Heart left ventricle (tissue), 16 donors: ENCODE measurements at regions of chr7 and their contacts with region 1.

Region 1: GRCh38 chr7:139777948-139778841 is at the start of gene HIPK2:
- DNase-seq: peak; percentile 83 to 90 (median 90)
- ATAC-seq: peak; percentile 51 to 88 (median 78)
- H3K4me3 ChIP-seq: peak within 1 kb of the TSS; percentile 65 to 95 (median 90)
- H3K27ac ChIP-seq: peak within 1 kb of the TSS; percentile 82 to 98 (median 94)
- H3K4me1 ChIP-seq: peaks cover 0 to 42% (median 26%) of the 10 kb centered on the region in 12 donors
- H3K27me3 ChIP-seq: no peaks in the 10 kb centered on the region
- CTCF ChIP-seq: no peak
- POLR2A ChIP-seq: no peak
- total RNA-seq, gene HIPK2: 102 to 244 (median 143) TPM

Region 2: DNA sequence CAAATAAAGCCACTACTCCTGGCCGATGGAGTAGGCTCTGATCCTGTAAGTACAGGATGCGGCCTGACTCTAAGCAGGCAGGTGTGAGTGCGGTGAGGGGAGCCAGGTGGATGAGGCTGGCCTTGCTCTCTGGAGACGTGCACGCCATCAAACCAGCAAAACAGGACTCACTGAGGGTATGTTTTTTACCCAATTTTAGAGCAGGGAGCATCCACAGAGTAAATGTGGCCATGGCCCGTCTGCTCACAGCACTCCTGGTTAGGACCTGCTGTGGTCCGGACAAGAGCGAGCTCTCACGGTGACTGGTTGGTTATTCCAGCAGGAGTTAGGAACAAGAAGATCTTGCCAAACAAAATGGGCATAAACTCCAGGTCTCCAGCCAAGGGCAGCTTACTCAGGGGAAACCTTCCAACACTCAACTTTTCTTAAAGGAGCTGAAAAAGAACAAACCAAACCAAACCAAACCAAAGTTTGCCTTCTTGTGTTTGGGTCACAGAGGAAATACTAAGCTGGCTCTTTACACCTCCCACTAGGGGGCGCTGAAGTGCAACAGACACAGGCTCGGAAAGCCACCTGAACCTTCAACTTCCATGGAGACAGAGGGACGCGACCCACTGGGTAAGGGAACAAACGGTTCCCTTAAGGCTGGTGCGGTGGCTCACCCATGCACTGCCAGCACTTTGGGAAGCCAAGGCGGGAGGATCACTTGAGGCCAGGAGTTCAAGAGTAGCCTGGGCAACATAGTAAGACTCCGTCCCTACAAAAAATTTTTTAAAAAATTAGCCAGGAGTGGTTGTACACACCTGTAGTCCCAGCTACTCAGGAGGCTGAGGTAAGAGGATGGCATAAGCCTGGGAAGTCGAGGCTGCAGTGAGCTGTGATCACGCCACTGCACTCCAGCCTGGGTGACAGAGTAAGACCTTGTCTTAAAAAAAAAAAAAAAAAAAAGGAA is 132.3 kb before region 1 on chr7:
- intact Hi-C with region 1: loop called (anchors 1 to 5 kb)
- DNase-seq: peak; percentile 83 to 90 (median 85)
- ATAC-seq: peak; percentile 53 to 71 (median 54)
- H3K4me3 ChIP-seq: no peak overlapping the region
- H3K27ac ChIP-seq: peak overlapping the region in 9 of 12 donors; percentile 5 to 83 (median 77)
- H3K4me1 ChIP-seq: peaks cover 0 to 53% (median 44%) of the 10 kb centered on the region in 12 donors
- H3K27me3 ChIP-seq: no peaks in the 10 kb centered on the region
- CTCF ChIP-seq: peak; percentile 84 to 95 (median 92)
- POLR2A ChIP-seq: peak in 1 of 2 donors; percentile 24

Region 3: DNA sequence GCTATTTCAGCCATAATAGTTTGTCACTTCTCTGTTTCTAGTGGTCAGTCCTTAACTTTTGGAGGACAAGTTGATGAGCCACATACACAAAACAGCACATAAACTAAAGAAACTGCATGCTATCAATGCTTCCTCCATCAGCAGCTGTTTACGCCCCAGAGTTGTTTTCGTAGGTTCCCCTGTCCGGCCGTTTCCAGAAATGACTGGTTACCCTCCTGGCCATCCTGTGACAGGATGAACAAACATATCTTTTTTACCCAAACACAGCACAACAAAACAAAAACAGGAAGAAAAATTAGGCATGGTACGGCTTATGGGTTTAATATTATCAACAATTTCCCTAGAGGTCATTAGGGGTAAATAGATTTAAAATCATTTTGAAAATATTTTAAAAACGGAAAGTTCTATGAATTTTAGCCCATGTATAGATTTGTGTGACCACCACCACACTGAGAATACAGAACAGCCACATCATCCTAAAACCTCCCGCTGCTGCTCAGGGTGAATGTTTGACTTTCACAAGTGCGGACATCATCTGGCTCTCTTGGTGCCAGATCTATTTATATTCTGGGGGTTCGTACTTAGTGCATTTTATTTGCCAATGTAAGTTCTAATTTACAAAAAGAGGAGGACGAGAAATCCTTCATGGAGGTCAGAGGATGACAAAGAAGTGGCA is 75.2 kb before region 1 on chr7:
- intact Hi-C with region 1: loop called in 1 of 10 experiments (anchors 10 kb)
- DNase-seq: no peak
- ATAC-seq: peak; percentile 48 to 71 (median 60)
- H3K4me3 ChIP-seq: no peak overlapping the region
- H3K27ac ChIP-seq: peak overlapping the region; percentile 66 to 93 (median 80)
- H3K4me1 ChIP-seq: peaks cover 14 to 87% (median 55%) of the 10 kb centered on the region in 12 donors
- H3K27me3 ChIP-seq: no peaks in the 10 kb centered on the region
- CTCF ChIP-seq: no peak
- POLR2A ChIP-seq: no peak

Region 4: GRCh38 chr7:139731802-139732470 is 46.3 kb before region 1 on chr7:
- intact Hi-C with region 1: loop called in 8 of 10 experiments (anchors 1 to 10 kb)
- DNase-seq: peak; percentile 80 to 93 (median 84)
- ATAC-seq: peak; percentile 64 to 77 (median 76)
- H3K4me3 ChIP-seq: peak overlapping the region in 4 of 12 donors; percentile 6 to 19 (median 9)
- H3K27ac ChIP-seq: peak overlapping the region; percentile 76 to 97 (median 91)
- H3K4me1 ChIP-seq: peaks cover 42 to 96% (median 82%) of the 10 kb centered on the region in 12 donors
- H3K27me3 ChIP-seq: no peaks in the 10 kb centered on the region
- CTCF ChIP-seq: no peak
- POLR2A ChIP-seq: peak in 1 of 2 donors; percentile 34

Region 5: DNA sequence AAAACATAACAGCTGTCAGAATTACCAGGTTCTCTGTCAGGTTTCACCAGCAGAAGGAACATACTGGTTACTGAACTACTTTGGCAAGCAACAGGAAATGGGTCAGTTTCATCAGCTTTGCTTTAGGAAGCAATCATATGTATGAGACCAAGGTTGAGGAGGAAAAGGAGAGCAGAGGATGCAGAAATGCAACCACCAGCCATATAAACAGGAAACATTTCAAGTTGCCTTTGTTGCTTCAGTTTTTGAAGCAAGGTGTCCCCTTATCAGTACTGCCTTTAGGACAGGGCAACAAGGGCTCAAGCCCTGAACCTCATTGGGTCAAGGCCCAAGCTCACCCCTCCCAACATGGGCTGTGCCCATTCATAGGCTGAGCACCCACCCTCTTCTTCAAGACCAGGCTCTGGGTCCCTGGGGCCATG is 10.6 kb before region 1 on chr7:
- intact Hi-C with region 1: no loop called
- DNase-seq: no peak
- ATAC-seq: no peak
- H3K4me3 ChIP-seq: no peak overlapping the region
- H3K27ac ChIP-seq: peak overlapping the region in 6 of 12 donors; percentile 0 to 73 (median 26)
- H3K4me1 ChIP-seq: peaks cover 5 to 98% (median 68%) of the 10 kb centered on the region in 12 donors
- H3K27me3 ChIP-seq: no peaks in the 10 kb centered on the region
- CTCF ChIP-seq: no peak
- POLR2A ChIP-seq: no peak

Region 6: DNA sequence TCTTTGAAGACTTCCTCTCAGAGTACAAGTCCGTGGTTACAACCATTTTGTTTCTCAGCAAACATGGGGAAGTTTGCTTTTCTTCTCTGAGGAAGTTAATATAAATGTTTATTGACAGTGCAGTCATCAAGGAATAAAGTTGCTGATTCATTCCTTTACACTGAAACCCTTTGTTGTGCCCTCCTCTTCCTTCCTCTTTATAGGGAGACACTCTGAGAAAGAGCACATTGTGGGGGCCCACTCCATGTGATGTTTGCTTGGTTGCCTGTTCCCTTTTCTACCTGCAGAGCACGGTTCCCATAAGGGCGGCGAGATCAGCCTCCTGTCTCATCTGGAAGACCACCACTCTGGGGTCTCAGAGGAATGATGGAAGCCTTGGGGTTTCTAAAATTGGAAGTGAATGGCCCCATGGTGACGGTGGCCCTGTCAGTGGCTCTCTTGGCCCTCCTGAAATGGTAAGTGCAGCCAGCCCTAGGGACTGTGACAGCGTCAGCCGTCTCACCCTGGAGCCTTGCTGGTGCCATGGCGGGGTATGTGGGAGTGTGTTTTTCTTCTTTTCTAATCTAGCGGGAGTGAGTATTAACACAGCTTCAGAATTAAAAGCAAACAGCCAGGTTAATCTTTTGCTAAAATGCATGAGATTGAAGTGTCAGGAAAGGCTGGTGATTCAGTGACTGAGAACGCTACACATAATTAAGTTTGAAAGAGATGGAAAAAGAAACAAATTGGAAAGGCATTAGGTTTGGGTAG is 51.0 kb after region 1 on chr7 and contains the start of gene TBXAS1:
- intact Hi-C with region 1: no loop called
- DNase-seq: peak in 2 of 5 donors; percentile 30 to 44
- ATAC-seq: peak; percentile 66 to 89 (median 77)
- H3K4me3 ChIP-seq: peak within 1 kb of the TSS in 8 of 12 donors; percentile 7 to 64 (median 30)
- H3K27ac ChIP-seq: peak within 1 kb of the TSS in 3 of 12 donors; percentile 9 to 90 (median 24)
- H3K4me1 ChIP-seq: peaks cover 0 to 17% (median 0%) of the 10 kb centered on the region in 12 donors
- H3K27me3 ChIP-seq: peaks cover 0 to 5% (median 0%) of the 10 kb centered on the region in 9 donors
- CTCF ChIP-seq: no peak
- POLR2A ChIP-seq: no peak
- total RNA-seq, gene TBXAS1: 2.0 to 32.0 (median 4.7) TPM

Region 7: GRCh38 chr7:139915864-139916716 is 137.9 kb after region 1 on chr7:
- intact Hi-C with region 1: loop called in 1 of 10 experiments (anchors 5 kb)
- DNase-seq: peak in 3 of 5 donors; percentile 26 to 61 (median 42)
- ATAC-seq: peak; percentile 65 to 85 (median 77)
- H3K4me3 ChIP-seq: no peak overlapping the region
- H3K27ac ChIP-seq: peak overlapping the region in 5 of 12 donors; percentile 0 to 62 (median 12)
- H3K4me1 ChIP-seq: peaks cover 0 to 51% (median 23%) of the 10 kb centered on the region in 12 donors
- H3K27me3 ChIP-seq: no peaks in the 10 kb centered on the region
- CTCF ChIP-seq: no peak
- POLR2A ChIP-seq: no peak

Region 8: GRCh38 chr7:140003913-140004382 is 225.8 kb after region 1 on chr7:
- intact Hi-C with region 1: loop called (anchors 2 to 10 kb)
- DNase-seq: no peak
- ATAC-seq: no peak
- H3K4me3 ChIP-seq: no peak overlapping the region
- H3K27ac ChIP-seq: no peak overlapping the region
- H3K4me1 ChIP-seq: no peaks in the 10 kb centered on the region
- H3K27me3 ChIP-seq: no peaks in the 10 kb centered on the region
- CTCF ChIP-seq: peak in 10 of 12 donors; percentile 23 to 53 (median 43)
- POLR2A ChIP-seq: no peak

Region 9: GRCh38 chr7:140153666-140154181 is 375.5 kb after region 1 on chr7:
- intact Hi-C with region 1: no loop called
- DNase-seq: peak in 1 of 5 donors; percentile 34
- ATAC-seq: no peak
- H3K4me3 ChIP-seq: no peak overlapping the region
- H3K27ac ChIP-seq: no peak overlapping the region
- H3K4me1 ChIP-seq: peaks cover 0 to 52% (median 25%) of the 10 kb centered on the region in 12 donors
- H3K27me3 ChIP-seq: no peaks in the 10 kb centered on the region
- CTCF ChIP-seq: no peak
- POLR2A ChIP-seq: no peak

Region 10: DNA sequence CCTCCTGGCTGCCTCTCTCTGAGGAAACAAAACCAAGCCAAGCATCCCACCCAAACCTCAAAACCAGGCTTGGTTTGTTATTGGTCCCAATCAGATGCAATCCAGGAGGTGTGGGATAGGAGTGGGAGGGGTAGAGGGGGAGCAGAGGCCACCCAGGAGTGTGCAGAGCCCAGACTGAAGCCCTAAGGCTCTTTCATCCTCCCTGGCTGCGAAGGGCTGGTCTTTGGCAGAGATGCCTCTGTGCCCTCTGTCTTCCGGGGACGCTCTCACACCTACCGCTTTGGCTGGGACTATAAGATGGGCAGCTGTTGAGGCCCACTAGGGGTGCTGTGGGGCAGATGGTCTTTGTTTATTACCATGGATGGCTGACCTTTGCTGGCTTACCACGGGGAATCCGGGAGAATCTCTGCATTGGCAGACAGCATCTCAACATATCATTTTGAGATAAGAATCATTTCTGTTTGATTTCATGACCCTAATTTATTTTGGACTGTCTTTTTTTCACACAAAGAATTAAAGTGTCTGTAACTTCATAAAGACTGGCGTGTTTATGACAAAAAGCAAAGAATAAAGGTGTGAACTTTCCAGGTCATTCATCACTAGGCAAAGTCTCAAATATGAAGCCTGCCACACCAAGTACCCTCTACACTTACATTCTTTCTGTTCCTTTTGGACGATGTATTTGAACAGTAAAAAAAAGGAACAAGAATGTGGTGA is 868.9 kb after region 1 on chr7:
- intact Hi-C with region 1: no loop called
- DNase-seq: peak in 1 of 5 donors; percentile 32
- ATAC-seq: peak; percentile 60 to 71 (median 69)
- H3K4me3 ChIP-seq: no peak overlapping the region
- H3K27ac ChIP-seq: no peak overlapping the region
- H3K4me1 ChIP-seq: peaks cover 0 to 18% (median under 1%) of the 10 kb centered on the region in 12 donors
- H3K27me3 ChIP-seq: no peaks in the 10 kb centered on the region
- CTCF ChIP-seq: peak; percentile 18 to 63 (median 42)
- POLR2A ChIP-seq: no peak